Calu3 (cell line): ENCODE measurements at regions of chr3 and their contacts with region 1.

Region 1: DNA sequence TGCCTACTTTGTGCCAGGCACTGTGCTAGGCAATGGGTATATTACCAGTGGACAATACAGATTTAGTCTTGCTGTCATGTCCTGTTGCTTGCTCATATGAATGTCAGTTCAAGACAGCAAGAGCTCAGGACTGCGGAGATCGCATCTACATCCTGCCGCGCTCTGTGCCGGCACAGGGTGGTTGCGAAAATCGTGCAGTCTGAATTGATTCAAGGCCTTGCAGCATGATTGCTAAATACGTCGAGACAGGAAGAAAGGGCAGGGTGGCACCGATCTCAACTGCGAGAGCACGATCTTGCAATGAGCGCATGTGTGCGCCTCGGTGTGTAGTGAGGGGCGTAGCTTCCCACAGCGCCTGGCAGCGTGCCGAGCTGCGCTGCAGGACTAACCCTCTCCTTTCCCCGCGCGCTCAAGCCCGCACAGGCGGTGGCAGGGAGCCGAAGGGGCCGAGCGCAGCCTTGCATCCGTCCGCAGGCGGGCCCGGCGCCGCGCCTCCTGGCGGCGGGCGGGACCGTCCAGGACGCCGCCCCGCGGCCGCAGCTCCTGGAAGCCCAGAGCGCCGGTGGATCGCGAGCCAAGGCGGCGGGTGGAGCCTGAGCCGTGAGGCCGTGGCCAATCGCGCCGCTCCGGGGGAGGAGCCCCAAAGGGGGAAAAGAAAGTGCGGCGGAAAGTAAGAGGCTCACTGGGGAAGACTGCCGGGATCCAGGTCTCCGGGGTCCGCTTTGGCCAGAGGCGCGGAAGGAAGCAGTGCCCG is at the start of gene IL1RAP:
- DNase-seq: peak; percentile 98
- H3K4me3 Mint-ChIP-seq: peak within 1 kb of the TSS; percentile 90
- H3K27ac Mint-ChIP-seq: peak within 1 kb of the TSS; percentile 90
- H3K4me1 Mint-ChIP-seq: peaks cover 38% of the 10 kb centered on the region
- H3K27me3 Mint-ChIP-seq: no peaks in the 10 kb centered on the region
- CTCF ChIP-seq: peak; percentile 92
- total RNA-seq, gene IL1RAP: 186 and 239 TPM in 2 replicates

Region 2: GRCh38 chr3:188947401-188948280 is 1565.9 kb before region 1 on chr3:
- CTCF ChIA-PET with region 1: no interaction called
- intact Hi-C with region 1: loop called (anchors 5 kb)
- DNase-seq: peak; percentile 94
- H3K4me3 Mint-ChIP-seq: peak overlapping the region; percentile 62
- H3K27ac Mint-ChIP-seq: peak overlapping the region; percentile 90
- H3K4me1 Mint-ChIP-seq: peaks cover 42% of the 10 kb centered on the region
- H3K27me3 Mint-ChIP-seq: no peaks in the 10 kb centered on the region
- CTCF ChIP-seq: peak; percentile 75

Region 3: GRCh38 chr3:190443257-190443656 is 70.3 kb before region 1 on chr3:
- CTCF ChIA-PET with region 1: interaction called, 13 read pairs
- intact Hi-C with region 1: loop called (anchors 2 kb)
- DNase-seq: peak; percentile 48
- H3K4me3 Mint-ChIP-seq: no peak overlapping the region
- H3K27ac Mint-ChIP-seq: peak overlapping the region; percentile 44
- H3K4me1 Mint-ChIP-seq: peaks cover 47% of the 10 kb centered on the region
- H3K27me3 Mint-ChIP-seq: no peaks in the 10 kb centered on the region
- CTCF ChIP-seq: peak; percentile 64

Region 4: DNA sequence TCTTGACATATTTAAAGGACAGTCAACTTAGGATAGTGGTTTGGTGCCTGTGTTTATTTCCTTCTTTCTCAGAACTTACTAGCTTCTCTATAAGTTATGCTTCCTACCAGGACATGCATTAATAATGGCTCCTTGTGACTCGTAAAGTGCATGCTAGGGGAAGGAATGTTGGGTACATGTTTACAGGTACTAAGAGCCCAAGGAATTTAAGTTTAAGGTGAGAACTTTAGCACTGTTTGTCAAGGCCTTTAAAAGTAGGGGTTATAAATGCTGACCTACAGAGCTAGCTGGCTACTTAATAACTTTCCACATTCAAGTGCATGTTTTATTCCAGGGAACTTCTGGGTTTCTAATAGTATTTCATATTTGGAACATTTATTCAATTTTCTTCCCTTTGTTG is 63.8 kb before region 1 on chr3 and contains the start of gene TMEM207:
- CTCF ChIA-PET with region 1: interaction called, 13 read pairs
- intact Hi-C with region 1: loop called (anchors 2 kb)
- DNase-seq: no peak
- H3K4me3 Mint-ChIP-seq: peak within 1 kb of the TSS; percentile 15
- H3K27ac Mint-ChIP-seq: peak within 1 kb of the TSS; percentile 76
- H3K4me1 Mint-ChIP-seq: peaks cover 71% of the 10 kb centered on the region
- H3K27me3 Mint-ChIP-seq: no peaks in the 10 kb centered on the region
- CTCF ChIP-seq: no peak
- total RNA-seq, gene TMEM207: 0.57 and 1.4 TPM in 2 replicates

Region 5: GRCh38 chr3:190526787-190527762 is 13.5 kb after region 1 on chr3:
- CTCF ChIA-PET with region 1: interaction called, 27 read pairs
- intact Hi-C with region 1: no loop called
- DNase-seq: no peak
- H3K4me3 Mint-ChIP-seq: no peak overlapping the region
- H3K27ac Mint-ChIP-seq: no peak overlapping the region
- H3K4me1 Mint-ChIP-seq: peaks cover 69% of the 10 kb centered on the region
- H3K27me3 Mint-ChIP-seq: no peaks in the 10 kb centered on the region
- CTCF ChIP-seq: no peak

Region 6: DNA sequence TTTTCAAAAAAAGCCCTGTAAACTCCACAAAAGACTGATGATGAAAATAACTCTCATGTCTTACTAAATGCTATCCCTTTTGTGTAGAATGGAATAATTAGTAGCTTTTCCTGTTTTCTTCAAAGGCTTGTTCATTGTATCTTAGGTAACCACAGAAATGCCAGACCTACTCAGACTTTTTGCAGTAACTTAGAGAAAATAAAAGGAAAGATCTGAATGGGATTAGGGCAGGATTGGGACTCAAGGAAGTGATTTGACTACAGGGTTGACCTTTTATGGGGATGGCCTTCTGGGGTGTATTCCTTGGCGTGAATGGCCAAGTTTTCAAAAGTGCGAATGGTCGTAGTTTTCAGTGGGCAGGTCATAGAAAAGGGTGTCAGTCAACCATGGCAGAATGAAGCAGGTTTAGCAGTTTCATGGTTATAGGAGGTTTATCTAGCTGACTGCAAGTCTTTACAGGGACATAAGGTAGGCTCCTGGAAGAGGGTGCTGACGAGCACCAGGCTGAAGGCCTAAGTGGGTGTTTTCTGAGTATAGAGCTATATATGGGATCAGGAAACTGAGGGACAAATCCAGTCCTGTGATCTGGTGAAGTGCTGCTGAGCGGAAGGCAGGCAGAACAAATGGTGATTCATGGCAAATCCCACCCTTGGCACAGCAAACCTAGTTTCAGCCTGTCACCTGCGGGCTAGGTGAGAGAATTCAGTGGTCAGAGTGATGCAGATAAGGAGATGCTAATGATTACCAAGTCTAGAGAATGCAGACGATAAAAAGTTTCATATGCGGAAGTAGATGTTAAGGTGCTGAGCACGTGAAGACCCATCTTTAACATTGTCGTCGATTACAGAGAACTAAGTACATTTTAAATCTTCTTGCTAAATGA is 46.7 kb after region 1 on chr3:
- CTCF ChIA-PET with region 1: interaction called, 14 read pairs
- intact Hi-C with region 1: loop called (anchors 2 kb)
- DNase-seq: peak; percentile 92
- H3K4me3 Mint-ChIP-seq: peak overlapping the region; percentile 46
- H3K27ac Mint-ChIP-seq: peak overlapping the region; percentile 99
- H3K4me1 Mint-ChIP-seq: peaks cover 81% of the 10 kb centered on the region
- H3K27me3 Mint-ChIP-seq: no peaks in the 10 kb centered on the region
- CTCF ChIP-seq: no peak

Region 7: DNA sequence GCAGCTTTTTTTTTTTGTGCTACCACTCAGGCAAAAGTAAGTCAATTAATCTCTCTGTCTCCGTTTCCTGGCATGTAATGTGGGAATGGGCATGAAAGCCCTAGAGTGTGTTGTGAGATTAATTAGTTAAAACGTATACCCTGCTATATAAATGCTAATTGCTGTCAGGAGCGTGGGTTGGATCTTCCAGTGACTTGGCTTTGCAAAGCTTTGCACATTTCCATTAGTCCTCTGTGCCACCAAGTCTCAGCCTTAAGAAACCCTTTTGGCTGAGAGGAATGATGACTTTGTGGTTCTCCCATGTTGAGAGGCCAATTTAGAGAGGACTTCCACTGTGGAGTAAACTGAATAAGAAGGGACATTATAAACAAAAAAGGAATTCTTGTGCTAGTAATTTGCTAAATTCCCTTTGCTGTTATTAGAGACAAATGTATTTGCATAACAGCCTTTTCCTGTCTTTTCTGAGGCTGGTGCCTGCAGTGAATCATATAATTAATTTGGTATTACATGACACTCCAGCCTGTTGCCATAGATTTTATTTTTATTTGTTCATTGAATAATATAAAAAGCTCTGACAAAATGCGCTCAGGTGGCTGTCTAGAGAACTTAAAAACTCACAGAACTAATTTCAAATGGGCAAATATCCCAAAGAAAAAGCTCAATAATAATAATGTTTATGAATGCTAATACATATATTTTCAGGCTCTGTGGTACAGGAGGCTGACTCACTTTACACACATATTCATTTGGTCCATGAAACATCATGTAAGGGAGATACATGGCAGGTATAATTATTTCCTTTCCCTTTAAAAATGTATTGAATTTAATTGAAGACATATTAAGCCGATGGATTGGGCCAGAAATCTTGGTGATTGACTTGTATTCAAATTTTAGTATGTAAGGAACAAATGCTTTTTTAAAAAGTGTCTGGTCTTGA is 83.0 kb after region 1 on chr3:
- CTCF ChIA-PET with region 1: no interaction called
- intact Hi-C with region 1: loop called (anchors 2 kb)
- DNase-seq: no peak
- H3K4me3 Mint-ChIP-seq: peak overlapping the region; percentile 42
- H3K27ac Mint-ChIP-seq: peak overlapping the region; percentile 87
- H3K4me1 Mint-ChIP-seq: peaks cover 71% of the 10 kb centered on the region
- H3K27me3 Mint-ChIP-seq: no peaks in the 10 kb centered on the region
- CTCF ChIP-seq: no peak